HEK293 (cell line): ENCODE measurements at regions of chr6 and their contacts with region 1.

Region 1: GRCh38 chr6:156942266-156942665 is 165.1 kb downstream of the ARID1B start:
- H3K4me3 ChIP-seq: no peak overlapping the region
- H3K27ac ChIP-seq: no peak overlapping the region
- H3K4me1 ChIP-seq: peaks cover 22% of the 10 kb centered on the region
- CTCF ChIP-seq: no peak

Region 2: DNA sequence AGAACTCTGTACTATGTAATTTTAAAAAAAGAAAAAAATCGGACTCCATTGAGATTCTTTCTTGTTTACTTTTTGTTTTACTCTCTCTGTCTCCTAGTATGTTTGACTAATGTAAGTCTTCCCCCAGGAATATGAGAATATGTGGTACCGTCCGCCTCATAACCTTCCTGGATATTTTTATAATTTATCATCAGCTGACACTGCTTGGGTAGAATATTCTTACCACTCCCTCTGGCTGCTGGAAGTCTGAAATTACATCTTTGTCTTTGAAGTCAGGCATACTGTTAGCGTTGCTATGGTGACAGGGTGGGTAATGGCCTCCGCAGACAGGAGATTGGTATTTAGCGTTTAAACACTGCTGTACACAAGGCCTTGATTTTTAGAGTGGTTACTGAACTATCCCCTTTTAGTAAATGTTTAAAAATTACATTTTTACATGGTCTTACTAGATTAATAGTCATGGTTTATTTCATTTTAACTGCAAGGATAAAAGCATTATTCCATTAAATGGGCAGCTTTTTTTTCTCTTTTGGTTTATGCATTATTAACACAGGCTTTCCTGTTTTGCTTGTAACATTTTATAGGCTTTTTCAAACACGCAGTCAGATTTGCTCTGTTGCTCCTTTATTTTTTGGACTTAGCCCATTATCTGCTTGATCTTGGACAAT is 11.3 kb after region 1 on chr6:
- CTCF ChIA-PET with region 1: interaction called, 21 read pairs
- POLR2A ChIA-PET with region 1: no interaction called
- H3K4me3 ChIP-seq: peak overlapping the region; percentile 11; the same call in 1 of the 2 replicates
- H3K27ac ChIP-seq: no peak overlapping the region
- H3K4me1 ChIP-seq: peaks cover 17% of the 10 kb centered on the region
- CTCF ChIP-seq: peak; percentile 53; the same call in 1 of the 2 replicates